GM12878 (cell line): ENCODE measurements at regions of chr11 and their contacts with region 1.

Region 1: DNA sequence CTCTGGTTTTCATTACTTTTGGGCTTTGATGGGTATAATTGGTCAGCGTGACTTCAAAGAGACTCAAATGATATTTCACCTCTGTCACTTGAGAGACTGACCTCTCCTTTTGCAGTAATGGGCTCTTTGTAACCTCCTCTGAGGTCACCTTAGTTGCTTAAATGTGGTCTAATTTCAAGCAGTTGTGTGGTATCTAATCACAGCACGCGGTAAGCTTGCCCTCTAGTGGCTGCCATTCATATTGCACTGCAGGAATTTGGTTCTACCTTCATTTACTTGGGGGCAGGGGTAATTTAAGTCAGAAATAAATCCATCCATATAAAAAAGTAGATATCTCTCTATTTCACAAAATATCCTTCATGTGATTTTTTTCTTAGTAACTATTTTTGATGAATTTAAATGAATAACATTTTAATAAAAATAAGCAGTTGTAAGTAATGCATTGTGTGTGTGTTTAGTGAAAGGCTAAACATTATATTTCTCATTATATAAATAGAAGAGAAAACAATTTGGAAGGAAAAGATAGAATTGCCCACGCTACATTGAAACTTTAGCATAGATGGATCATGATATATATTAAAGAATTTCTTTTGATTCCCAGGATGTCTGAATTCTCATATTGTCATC is 55.0 kb upstream of the ANO3 start:
- DNase-seq: no peak
- ATAC-seq: peak; percentile 88
- H3K4me3 ChIP-seq: no peak overlapping the region
- H3K27ac ChIP-seq: no peak overlapping the region
- H3K4me1 ChIP-seq: no peaks in the 10 kb centered on the region
- H3K27me3 ChIP-seq: no peaks in the 10 kb centered on the region
- CTCF ChIP-seq: peak; percentile 86 to 89 (median 89)
- EP300 ChIP-seq: no peak
- POLR2A ChIP-seq: no peak
- RAD21 ChIP-seq: peak; percentile 89

Region 2: GRCh38 chr11:26063915-26064314 is 213.0 kb before region 1 on chr11:
- CTCF ChIA-PET with region 1: no interaction called
- POLR2A ChIA-PET with region 1: no interaction called
- RAD21 ChIA-PET with region 1: no interaction called
- SMC1A ChIA-PET with region 1: no interaction called
- in situ Hi-C with region 1: no loop called
- intact Hi-C with region 1: no loop called
- DNase-seq: no peak
- ATAC-seq: no peak
- H3K4me3 ChIP-seq: no peak overlapping the region
- H3K27ac ChIP-seq: no peak overlapping the region
- H3K4me1 ChIP-seq: peaks cover 6% of the 10 kb centered on the region
- H3K27me3 ChIP-seq: no peaks in the 10 kb centered on the region
- CTCF ChIP-seq: no peak
- EP300 ChIP-seq: no peak
- POLR2A ChIP-seq: no peak
- RAD21 ChIP-seq: no peak

Region 3: DNA sequence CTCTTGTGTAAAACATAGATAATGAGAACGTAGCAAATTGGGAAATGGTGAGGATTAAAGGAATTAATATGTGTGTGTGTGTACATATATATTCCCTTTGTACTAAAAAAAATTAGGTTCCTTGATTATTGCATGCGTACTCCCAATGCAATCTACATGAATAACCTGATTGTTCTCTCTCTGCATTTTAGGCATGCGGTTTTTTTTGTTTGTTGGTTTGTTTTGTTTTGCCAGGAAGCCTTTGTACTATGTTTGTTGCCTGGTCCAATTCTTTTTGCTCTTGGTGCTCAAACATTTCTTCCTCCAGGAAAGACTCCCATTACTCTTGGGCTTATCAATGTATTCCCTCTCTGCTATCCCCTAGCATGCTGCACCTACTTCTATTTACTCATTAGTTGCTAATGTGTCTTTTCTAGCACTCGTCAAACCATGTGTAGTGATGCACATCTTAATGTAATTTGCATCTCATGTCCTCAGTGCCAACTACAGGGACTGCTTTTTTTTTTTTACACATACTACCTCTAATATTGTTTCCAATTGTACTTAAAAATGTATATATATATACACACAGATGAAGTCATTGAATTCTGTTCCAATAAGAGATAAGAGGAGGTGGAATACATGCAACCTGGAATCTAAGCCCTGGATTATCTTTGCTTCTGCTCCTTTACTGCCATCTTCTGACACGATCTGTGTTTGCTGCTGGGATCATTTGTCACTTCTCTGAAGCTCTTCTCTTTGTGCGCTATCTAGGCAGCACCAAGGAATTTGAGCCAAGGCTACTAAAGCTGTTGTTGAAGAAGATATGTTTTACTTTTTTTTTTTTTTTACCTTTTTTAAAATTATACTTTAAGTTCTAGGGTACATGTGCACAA is 142.2 kb before region 1 on chr11:
- CTCF ChIA-PET with region 1: no interaction called
- POLR2A ChIA-PET with region 1: no interaction called
- RAD21 ChIA-PET with region 1: no interaction called
- SMC1A ChIA-PET with region 1: no interaction called
- in situ Hi-C with region 1: no loop called
- intact Hi-C with region 1: loop called (anchors 1 kb)
- DNase-seq: no peak
- ATAC-seq: peak; percentile 54; the same call in 2 of the 3 replicates
- H3K4me3 ChIP-seq: no peak overlapping the region
- H3K27ac ChIP-seq: no peak overlapping the region
- H3K4me1 ChIP-seq: no peaks in the 10 kb centered on the region
- H3K27me3 ChIP-seq: no peaks in the 10 kb centered on the region
- CTCF ChIP-seq: peak; percentile 34 to 47 (median 42); a peak in 5 of 6 replicates
- EP300 ChIP-seq: no peak
- POLR2A ChIP-seq: no peak
- RAD21 ChIP-seq: peak; percentile 77